Right cardiac atrium (tissue), 5 donors: ENCODE measurements at regions of chr1 and their contacts with region 1.

Region 1: DNA sequence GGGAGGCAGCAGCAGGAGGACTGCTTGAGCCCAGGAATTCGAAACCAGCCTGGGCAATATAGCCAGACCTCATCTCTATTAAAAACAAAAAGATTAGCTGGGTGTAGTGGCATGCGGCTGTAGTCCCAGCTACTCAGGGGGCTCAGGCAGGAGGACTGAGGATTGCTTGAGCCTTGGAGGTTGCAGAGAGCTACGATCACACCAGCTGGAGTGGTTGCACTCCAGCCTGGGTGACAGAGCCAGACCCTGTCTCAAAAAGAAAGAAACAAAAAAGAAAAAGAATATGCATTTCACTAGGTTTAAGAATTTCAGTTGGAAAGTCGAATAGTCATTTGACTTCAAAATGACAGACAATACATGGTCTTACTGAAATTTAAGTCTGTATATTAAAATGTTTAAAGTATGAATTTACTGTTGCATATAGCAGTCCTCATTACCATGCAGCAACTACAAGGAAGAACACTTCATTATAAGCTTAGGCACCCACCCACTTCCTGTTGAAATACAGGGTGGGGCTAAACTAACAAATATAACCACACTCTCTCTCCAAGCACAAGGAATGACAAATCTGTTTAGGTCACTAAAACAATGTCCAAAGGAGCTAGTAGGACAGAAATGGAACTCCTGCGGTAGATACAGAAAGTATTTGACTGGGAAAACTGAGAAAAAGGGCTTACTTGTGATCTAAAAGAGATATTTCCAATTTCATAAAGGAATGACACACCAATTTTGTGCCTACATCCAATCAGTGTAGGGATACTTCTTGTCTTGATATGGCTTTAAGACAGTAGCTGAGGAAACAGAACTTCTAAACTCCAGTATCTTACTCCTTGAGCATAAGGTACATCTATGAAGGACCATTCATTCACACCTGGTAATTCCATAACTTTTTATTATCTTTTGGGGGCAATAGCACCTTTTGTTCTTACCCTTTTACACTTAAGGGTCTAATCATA is 44.1 kb downstream of the GPR3 start:
- DNase-seq: no peak
- ATAC-seq: peak; percentile 84 to 93
- H3K4me3 ChIP-seq: no peak overlapping the region
- H3K27ac ChIP-seq: peak overlapping the region; percentile 60
- H3K4me1 ChIP-seq: peaks cover 17% of the 10 kb centered on the region
- H3K27me3 ChIP-seq: no peaks in the 10 kb centered on the region

Region 2: DNA sequence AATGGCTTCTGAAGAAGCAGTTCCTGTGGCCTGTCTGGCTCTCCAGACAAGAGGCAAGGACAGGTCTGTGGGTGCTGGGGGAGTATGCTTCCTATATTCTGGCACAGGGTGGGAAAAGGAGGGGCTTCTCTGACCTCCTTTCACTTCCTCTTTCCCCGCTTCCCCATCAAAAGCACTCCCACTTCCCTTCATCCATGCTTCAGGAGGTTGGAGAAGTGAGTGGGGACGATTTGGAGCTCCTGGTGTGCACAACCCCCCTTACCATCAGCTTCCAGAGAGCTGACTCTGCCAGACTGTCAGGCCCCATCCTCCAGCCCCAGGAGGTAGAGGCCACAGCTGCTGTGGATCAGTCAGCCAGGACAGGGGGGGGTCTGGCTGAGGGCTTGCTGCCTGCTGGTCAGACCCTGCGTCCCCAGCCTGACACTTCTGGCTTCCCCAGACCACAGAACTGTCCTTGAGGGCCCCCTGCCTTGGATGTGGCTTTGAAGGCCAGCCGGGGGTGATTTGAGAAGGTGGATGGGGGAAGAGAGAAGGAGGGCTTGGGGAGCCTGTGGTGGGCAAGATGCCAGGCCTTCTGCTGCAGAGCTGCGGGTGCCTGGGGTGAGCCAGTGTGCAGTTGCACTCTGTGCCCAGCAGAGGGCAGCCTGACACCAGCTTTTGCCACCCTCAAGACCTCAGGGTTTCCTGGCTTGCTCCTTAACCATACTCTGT is 136.0 kb before region 1 on chr1:
- intact Hi-C with region 1: no loop called
- DNase-seq: peak; percentile 82 to 94 (median 93)
- ATAC-seq: peak; percentile 86
- H3K4me3 ChIP-seq: no peak overlapping the region
- H3K27ac ChIP-seq: peak overlapping the region; percentile 78
- H3K4me1 ChIP-seq: peaks cover 13% of the 10 kb centered on the region
- H3K27me3 ChIP-seq: no peaks in the 10 kb centered on the region

Region 3: GRCh38 chr1:27489910-27490741 is 53.6 kb after region 1 on chr1 and contains the start of gene WASF2:
- intact Hi-C with region 1: loop called in 1 of 4 experiments (anchors 10 kb)
- DNase-seq: peak; percentile 97 to 99 (median 99)
- ATAC-seq: peak; percentile 97
- H3K4me3 ChIP-seq: peak within 1 kb of the TSS; percentile 64
- H3K27ac ChIP-seq: peak within 1 kb of the TSS; percentile 98
- H3K4me1 ChIP-seq: peaks cover 6% of the 10 kb centered on the region
- H3K27me3 ChIP-seq: no peaks in the 10 kb centered on the region
- total RNA-seq, gene WASF2: 64.4 to 77.9 (median 71.5) TPM

Region 4: DNA sequence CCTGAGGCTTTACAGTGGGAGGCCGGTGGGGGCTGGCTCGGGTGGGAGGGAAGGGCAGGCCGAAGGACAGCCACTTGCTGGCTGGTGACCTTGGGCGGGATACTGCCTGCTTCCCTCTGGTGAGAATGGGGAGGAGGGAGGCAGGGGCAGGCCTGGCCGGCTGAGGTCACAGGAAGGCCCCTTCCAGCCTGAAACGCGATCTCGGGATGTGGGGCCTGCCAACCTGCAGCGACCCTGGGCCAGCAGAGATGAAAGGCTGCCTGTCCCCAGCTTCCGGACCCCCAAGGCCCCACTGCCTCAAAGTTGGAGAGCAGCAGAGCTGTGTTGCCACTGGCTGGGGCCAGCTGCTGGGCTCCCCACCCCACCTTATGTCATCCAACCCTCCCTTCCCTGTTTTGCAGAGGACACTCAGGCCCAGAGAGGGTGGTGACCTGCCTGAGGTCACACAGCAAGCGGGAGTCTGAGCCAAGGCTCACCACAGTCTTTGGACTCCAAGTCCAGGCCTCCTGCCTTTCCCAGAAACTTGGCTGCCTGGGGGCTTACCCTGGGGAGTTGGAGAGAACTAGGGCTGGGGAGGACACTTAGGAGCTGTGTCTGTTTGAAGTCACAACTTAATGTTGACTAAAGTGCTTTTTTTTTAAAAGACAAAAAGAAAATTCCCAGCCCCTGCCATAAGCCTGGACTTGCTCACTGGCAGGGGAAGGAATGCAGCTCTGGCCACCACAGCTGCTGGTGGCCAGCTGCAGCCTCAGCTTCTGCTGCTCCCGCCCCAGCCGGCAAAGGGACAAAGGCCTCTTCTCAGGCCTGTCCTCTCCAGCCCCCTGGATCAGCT is 68.3 kb after region 1 on chr1:
- intact Hi-C with region 1: loop called in 1 of 4 experiments (anchors 10 kb)
- DNase-seq: peak; percentile 92 to 97 (median 95)
- ATAC-seq: peak; percentile 95 to 97
- H3K4me3 ChIP-seq: no peak overlapping the region
- H3K27ac ChIP-seq: peak overlapping the region; percentile 76
- H3K4me1 ChIP-seq: peaks cover 9% of the 10 kb centered on the region
- H3K27me3 ChIP-seq: no peaks in the 10 kb centered on the region